Left colon (tissue), 2 donors: ENCODE measurements at regions of chr10 and their contacts with region 1.

Region 1: DNA sequence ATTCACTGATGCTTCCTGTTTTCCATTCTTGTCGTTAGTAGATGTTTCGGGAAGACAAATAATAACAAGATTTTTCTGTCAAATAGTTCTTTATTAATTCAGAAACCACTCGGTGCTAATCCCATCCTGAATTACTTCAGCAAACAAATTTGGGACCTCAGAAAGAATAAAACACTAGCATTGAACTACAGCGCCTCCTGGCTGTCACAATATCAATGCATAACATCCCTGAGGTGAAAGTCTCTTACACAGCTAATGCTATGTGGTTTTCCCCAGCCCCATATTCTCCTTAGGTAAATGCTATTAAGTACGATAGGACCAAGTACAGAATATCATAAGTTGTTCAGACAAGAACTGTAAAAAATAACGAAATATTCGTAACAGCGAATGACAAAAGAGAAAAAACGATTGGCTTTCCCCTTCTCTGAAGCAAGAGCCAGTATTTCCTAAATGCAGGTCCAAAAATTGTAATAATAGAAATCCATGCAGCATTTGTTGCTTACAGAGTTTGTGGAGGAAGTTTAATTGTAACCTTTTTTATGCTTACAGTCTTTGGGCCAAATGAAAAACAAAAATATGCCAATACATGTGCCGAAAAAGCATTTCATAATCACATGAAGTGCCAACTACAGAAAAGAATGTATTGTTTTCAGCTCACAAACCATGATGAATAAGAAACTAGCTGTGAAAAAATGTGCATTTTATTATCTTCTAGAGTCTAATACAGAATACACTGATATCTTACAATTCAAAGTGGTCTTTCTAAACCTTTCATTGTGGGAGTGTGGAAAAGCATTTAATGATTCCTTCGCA is 47.3 kb downstream of the MYPN start:
- DNase-seq: peak; percentile 31 to 75
- ATAC-seq: peak; percentile 62

Region 2: GRCh38 chr10:67849331-67850011 is 307.1 kb before region 1 on chr10:
- intact Hi-C with region 1: loop called in 1 of 2 experiments (anchors 10 kb)
- DNase-seq: peak; percentile 95 to 97
- ATAC-seq: peak; percentile 94

Region 3: DNA sequence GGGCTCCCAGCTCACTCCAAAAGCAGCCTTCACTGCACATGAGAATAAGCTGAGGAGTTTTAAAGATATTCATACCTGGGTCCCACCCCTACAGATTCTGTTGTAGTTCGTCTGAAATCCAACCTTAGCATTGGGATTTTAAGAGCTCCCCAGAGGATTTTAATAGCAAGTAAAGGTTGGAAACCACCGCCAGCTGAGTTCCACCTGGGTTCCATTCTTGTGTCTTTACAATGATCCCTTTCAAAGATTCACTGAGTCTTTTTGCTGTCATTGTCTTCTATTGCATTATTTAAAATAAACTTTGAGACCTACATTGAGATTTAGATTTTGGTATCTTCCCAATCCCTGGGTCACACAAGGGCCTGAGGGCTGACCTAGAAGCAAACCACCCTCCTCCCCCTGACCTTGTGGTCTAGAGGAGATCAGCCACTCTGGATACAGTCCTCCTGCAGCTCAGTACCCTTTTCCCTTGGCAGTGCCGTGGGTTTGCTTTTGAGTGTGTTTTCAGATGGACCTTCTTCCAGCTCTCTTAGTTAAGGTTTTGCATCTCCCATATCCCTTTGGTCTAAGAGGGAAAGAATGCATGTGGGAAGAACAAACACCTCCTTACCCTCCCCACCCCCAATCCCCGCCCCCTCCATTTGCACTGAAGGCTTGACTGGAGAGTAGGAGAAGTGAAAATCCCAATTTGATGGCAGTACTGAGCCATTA is 294.7 kb before region 1 on chr10:
- intact Hi-C with region 1: loop called (anchors 5 to 10 kb)
- DNase-seq: no peak
- ATAC-seq: no peak

Region 4: DNA sequence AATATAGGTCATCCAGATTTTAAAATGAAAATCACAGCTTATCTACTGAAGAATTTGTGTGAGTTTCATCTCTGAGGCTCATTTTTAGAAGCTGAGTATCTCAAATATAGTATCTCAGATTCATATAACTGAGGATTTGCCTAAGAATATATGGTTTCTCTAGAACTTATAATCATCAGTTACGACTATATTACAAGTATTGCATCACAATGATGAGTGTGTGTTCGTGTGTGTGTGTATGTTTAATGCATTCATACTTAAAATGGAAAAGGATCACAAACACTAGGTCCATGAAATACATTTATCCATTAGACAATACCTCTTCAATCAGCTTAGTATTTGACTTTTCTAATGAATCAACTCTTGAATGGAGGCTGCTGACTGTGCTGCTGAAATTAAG is 229.2 kb after region 1 on chr10:
- intact Hi-C with region 1: no loop called
- DNase-seq: no peak
- ATAC-seq: no peak